ENCODE measurements at regions of chr14 and their contacts with region 1.

Region 1: GRCh38 chr14:56339855-56340701 is 221.9 kb downstream of the PELI2 start:
- DNase-seq: no peak
- ATAC-seq: peak; percentile 93
- H3K4me3 ChIP-seq: no peak overlapping the region
- H3K27ac ChIP-seq: no peak overlapping the region
- H3K4me1 ChIP-seq: no peaks in the 10 kb centered on the region
- H3K27me3 ChIP-seq: no peaks in the 10 kb centered on the region
- CTCF ChIP-seq: peak; percentile 75 to 81 (median 76)
- EP300 ChIP-seq: no peak
- POLR2A ChIP-seq: no peak
- RAD21 ChIP-seq: peak; percentile 80

Region 2: GRCh38 chr14:55438066-55438683 is 901.9 kb before region 1 on chr14:
- CTCF ChIA-PET with region 1: interaction called, 5 read pairs
- POLR2A ChIA-PET with region 1: no interaction called
- RAD21 ChIA-PET with region 1: interaction called, 3 read pairs
- SMC1A ChIA-PET with region 1: no interaction called
- in situ Hi-C with region 1: loop called (anchors 5 kb)
- intact Hi-C with region 1: loop called (anchors 1 kb)
- DNase-seq: no peak
- ATAC-seq: peak; percentile 82
- H3K4me3 ChIP-seq: no peak overlapping the region
- H3K27ac ChIP-seq: no peak overlapping the region
- H3K4me1 ChIP-seq: no peaks in the 10 kb centered on the region
- H3K27me3 ChIP-seq: no peaks in the 10 kb centered on the region
- CTCF ChIP-seq: peak; percentile 37 to 66 (median 54); a peak in 5 of 6 replicates
- EP300 ChIP-seq: no peak
- POLR2A ChIP-seq: no peak
- RAD21 ChIP-seq: peak; percentile 69

Region 3: GRCh38 chr14:55707365-55707804 is 632.7 kb before region 1 on chr14:
- CTCF ChIA-PET with region 1: interaction called, 9 read pairs
- POLR2A ChIA-PET with region 1: no interaction called
- RAD21 ChIA-PET with region 1: interaction called, 4 read pairs
- SMC1A ChIA-PET with region 1: interaction called, 3 read pairs
- in situ Hi-C with region 1: no loop called
- intact Hi-C with region 1: loop called (anchors 1 kb)
- DNase-seq: no peak
- ATAC-seq: no peak
- H3K4me3 ChIP-seq: no peak overlapping the region
- H3K27ac ChIP-seq: no peak overlapping the region
- H3K4me1 ChIP-seq: no peaks in the 10 kb centered on the region
- H3K27me3 ChIP-seq: no peaks in the 10 kb centered on the region
- CTCF ChIP-seq: peak; percentile 41 to 68 (median 47); a peak in 4 of 6 replicates
- EP300 ChIP-seq: no peak
- POLR2A ChIP-seq: no peak
- RAD21 ChIP-seq: peak; percentile 66

Region 4: DNA sequence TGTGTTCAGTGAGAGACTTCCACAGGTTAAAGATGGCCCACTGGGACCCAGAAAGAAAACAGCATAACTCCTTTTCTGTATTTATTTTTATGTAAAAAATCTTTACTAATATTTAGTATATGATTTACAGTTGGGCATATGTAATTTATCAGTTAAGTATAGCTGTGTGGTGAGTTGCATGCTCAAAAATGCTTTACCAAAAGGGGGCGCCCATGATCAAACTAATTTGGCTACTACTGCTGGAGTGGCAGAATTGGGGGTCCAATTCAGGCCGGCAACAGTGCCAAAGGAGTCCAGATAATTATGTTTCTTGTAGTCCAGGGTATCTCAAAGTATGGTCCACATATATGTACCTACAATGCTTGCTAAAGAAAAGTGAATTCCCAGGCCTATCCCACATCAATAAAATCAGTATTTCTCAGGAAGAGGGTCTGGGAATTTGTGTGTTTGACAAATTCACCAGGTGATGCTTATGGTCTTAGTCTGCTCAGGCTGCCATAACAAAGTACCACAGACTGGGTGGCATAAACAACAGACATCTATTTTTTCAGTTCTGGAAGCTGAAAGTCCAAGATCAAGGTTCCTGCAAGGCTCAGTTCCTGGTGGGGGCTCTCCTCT is 608.1 kb before region 1 on chr14:
- CTCF ChIA-PET with region 1: interaction called, 51 read pairs
- POLR2A ChIA-PET with region 1: no interaction called
- RAD21 ChIA-PET with region 1: interaction called, 24 read pairs
- SMC1A ChIA-PET with region 1: interaction called, 11 read pairs
- in situ Hi-C with region 1: loop called (anchors 10 kb)
- intact Hi-C with region 1: loop called (anchors 1 kb)
- DNase-seq: no peak
- ATAC-seq: peak; percentile 77
- H3K4me3 ChIP-seq: no peak overlapping the region
- H3K27ac ChIP-seq: no peak overlapping the region
- H3K4me1 ChIP-seq: no peaks in the 10 kb centered on the region
- H3K27me3 ChIP-seq: no peaks in the 10 kb centered on the region
- CTCF ChIP-seq: peak; percentile 53 to 64 (median 63)
- EP300 ChIP-seq: no peak
- POLR2A ChIP-seq: no peak
- RAD21 ChIP-seq: peak; percentile 64

Region 5: DNA sequence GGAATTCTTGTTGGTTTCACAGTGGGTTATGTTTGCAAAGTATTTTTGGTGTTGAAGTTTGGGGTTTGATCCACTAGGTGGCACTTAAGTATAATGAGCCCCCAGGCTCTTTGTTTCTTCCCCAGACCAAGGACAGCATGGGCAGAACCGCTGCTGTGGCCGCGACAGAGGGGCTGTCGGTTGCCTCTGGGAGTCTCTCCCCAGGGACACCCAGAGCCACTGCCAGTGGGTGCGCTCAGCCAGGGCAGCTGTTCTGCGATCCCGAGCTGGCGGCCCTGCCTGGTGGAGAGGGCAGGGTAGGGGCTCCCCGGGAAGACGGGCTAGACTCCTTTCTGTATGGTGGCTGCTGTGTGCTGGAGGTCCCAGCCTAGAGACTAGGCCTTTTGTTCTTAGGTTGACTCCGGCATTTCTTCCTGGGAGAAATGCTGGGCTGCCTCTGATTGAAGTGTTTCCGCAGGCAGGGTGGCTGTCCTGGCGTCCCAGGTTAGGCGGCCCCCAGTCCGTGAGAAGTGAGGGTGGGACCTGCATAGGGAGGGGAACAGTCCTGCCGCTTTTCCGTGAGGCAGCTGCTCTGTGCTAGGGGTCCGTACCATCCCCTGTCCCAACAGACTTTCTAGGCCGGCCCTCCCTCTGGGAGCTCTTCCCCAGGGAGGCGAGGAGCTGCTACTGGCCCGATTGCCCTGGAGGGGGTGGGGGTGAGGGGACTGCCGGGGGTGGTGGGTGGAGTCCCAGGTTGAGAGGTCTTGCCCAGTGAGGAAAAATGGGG is 475.0 kb before region 1 on chr14:
- CTCF ChIA-PET with region 1: no interaction called
- POLR2A ChIA-PET with region 1: no interaction called
- RAD21 ChIA-PET with region 1: no interaction called
- SMC1A ChIA-PET with region 1: no interaction called
- in situ Hi-C with region 1: no loop called
- intact Hi-C with region 1: loop called (anchors 10 kb)
- DNase-seq: no peak
- ATAC-seq: no peak
- H3K4me3 ChIP-seq: no peak overlapping the region
- H3K27ac ChIP-seq: no peak overlapping the region
- H3K4me1 ChIP-seq: no peaks in the 10 kb centered on the region
- H3K27me3 ChIP-seq: no peaks in the 10 kb centered on the region
- CTCF ChIP-seq: peak; percentile 9 to 44 (median 15); a peak in 5 of 6 replicates
- EP300 ChIP-seq: no peak
- POLR2A ChIP-seq: no peak
- RAD21 ChIP-seq: peak; percentile 66